ENCODE measurements at regions of chr1 and their contacts with region 1.

Region 1: GRCh38 chr1:234722904-234723720 is 113.1 kb upstream of the IRF2BP2 start:
- DNase-seq: peak; percentile 94
- H3K4me3 ChIP-seq: peak overlapping the region; percentile 12 to 29 (median 19)
- H3K27ac ChIP-seq: peak overlapping the region; percentile 93
- H3K4me1 ChIP-seq: peaks cover 67% of the 10 kb centered on the region
- H3K27me3 ChIP-seq: no peaks in the 10 kb centered on the region
- CTCF ChIP-seq: no peak

Region 2: DNA sequence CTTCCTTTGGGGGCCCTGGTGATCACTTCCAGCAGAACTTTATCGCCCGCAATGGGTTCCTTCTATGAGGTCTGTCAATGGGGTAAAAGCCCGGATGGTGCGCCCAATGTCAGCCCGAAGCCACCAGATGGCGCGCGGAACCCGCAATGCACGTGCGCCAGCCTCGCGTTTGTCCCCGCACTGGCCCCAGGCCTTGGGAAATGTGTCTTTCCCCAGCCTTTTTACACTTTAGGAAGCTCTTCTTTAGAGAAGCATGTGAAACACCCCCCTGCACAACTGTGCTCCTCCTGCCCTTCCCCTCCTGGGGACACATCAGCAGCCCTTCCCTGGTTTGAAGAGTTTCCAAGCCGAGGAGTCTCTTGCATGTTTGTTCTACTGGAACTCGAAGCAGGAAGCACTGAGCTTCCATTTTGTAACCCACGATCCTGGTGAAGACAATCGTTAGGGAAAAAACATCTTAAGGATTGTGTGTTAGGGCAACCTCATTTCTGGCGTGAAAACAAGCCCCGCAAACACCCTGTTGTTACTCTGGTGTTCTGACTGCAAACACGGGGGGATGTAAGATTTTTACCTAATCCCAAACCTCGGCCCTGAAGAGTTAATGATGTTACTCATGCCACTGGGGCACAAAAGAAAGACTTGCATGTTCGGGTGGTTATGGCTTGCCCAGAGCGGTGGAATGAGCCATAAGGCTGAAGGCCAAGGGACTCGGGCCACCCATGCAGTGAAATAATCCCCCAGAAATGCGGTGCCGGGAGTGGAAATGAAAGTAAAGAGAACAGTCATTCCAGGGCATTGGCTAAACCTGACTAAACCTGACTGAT is 223.8 kb before region 1 on chr1:
- CTCF ChIA-PET with region 1: no interaction called
- dilution Hi-C with region 1: no loop called
- in situ Hi-C with region 1: loop called in 1 of 2 experiments (anchors 10 kb)
- intact Hi-C with region 1: loop called (anchors 1 kb)
- DNase-seq: peak; percentile 84
- H3K4me3 ChIP-seq: peak overlapping the region in 2 of 3 experiments; percentile 10 to 13
- H3K27ac ChIP-seq: peak overlapping the region; percentile 90
- H3K4me1 ChIP-seq: peaks cover 38% of the 10 kb centered on the region
- H3K27me3 ChIP-seq: no peaks in the 10 kb centered on the region
- CTCF ChIP-seq: peak; percentile 89 to 97

Region 3: DNA sequence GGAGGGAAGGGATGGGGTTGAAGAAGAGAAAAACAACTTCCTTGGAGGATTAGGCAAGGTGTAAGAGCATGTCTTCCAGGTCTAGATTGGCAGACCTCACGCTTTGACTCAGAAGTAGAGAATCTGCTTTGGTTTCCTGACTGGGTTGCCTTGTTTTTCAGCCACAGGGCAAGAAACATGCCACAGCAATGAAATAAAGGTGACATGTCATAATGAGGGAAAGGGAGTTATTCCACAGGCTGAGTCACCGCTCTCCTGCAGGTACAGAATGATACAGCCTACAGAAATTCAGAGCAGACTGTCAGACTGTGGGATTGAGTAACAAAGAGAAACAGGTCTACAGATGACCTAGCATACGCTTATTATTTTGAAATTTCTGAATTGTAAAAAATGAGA is 158.5 kb before region 1 on chr1:
- CTCF ChIA-PET with region 1: no interaction called
- dilution Hi-C with region 1: no loop called
- in situ Hi-C with region 1: no loop called
- intact Hi-C with region 1: loop called (anchors 1 kb)
- DNase-seq: peak; percentile 100
- H3K4me3 ChIP-seq: no peak overlapping the region
- H3K27ac ChIP-seq: peak overlapping the region; percentile 99
- H3K4me1 ChIP-seq: peaks cover 22% of the 10 kb centered on the region
- H3K27me3 ChIP-seq: no peaks in the 10 kb centered on the region
- CTCF ChIP-seq: no peak

Region 4: GRCh38 chr1:234656856-234657654 is 66.1 kb before region 1 on chr1:
- CTCF ChIA-PET with region 1: interaction called, 4 read pairs
- dilution Hi-C with region 1: loop called (anchors 5 kb)
- in situ Hi-C with region 1: loop called in 1 of 2 experiments (anchors 5 kb)
- intact Hi-C with region 1: loop called (anchors 1 kb)
- DNase-seq: peak; percentile 100
- H3K4me3 ChIP-seq: peak overlapping the region; percentile 51 to 70 (median 61)
- H3K27ac ChIP-seq: peak overlapping the region; percentile 99
- H3K4me1 ChIP-seq: peaks cover 47% of the 10 kb centered on the region
- H3K27me3 ChIP-seq: no peaks in the 10 kb centered on the region
- CTCF ChIP-seq: peak in 1 of 2 donors; percentile 21

Region 5: GRCh38 chr1:234772345-234773147 is 49.4 kb after region 1 on chr1:
- CTCF ChIA-PET with region 1: no interaction called
- dilution Hi-C with region 1: no loop called
- in situ Hi-C with region 1: no loop called
- intact Hi-C with region 1: loop called (anchors 2 kb)
- DNase-seq: peak; percentile 98
- H3K4me3 ChIP-seq: no peak overlapping the region
- H3K27ac ChIP-seq: peak overlapping the region; percentile 62
- H3K4me1 ChIP-seq: peaks cover 13% of the 10 kb centered on the region
- H3K27me3 ChIP-seq: peaks cover 11% of the 10 kb centered on the region
- CTCF ChIP-seq: no peak

Region 6: DNA sequence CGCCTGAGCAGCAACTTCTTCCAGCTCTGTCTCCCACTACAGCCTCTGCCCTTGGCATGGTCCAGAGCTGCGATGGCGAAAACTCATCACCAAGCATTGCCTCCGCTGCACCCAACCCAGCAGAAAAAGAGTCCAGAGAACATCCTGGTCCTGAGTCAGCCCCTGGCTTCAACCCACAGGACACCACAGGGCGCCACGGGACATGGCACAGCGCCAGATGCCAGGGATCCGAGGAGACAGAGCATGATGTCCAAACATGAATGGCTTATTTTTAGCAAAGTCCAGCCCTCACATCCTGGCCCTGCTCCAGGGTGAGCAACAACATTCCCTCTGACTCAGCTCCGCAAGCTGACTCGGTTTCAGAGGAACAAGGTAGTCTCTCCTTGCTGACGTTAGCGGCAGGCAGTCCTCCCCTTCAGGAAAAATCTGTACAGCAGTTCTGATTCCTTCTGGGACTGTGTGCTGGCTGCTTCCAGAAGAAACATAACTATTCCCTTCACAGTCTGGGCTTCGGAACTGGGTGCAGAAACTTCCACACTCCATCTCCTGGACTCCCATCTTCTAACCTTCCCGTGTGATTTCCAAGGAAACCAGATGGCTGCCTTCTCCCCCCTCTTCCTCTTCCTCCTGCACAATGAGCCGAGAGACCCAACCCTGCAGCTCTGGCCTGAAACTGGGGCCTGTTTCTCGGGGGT is 274.2 kb after region 1 on chr1:
- CTCF ChIA-PET with region 1: no interaction called
- dilution Hi-C with region 1: no loop called
- in situ Hi-C with region 1: loop called (anchors 10 kb)
- intact Hi-C with region 1: loop called (anchors 1 kb)
- DNase-seq: peak; percentile 100
- H3K4me3 ChIP-seq: peak overlapping the region in 1 of 3 experiments; percentile 8
- H3K27ac ChIP-seq: peak overlapping the region; percentile 98
- H3K4me1 ChIP-seq: peaks cover 27% of the 10 kb centered on the region
- H3K27me3 ChIP-seq: no peaks in the 10 kb centered on the region
- CTCF ChIP-seq: peak in 1 of 2 donors; percentile 7

Region 7: GRCh38 chr1:235067263-235068172 is 344.4 kb after region 1 on chr1:
- CTCF ChIA-PET with region 1: no interaction called
- dilution Hi-C with region 1: no loop called
- in situ Hi-C with region 1: loop called in 1 of 2 experiments (anchors 10 kb)
- intact Hi-C with region 1: loop called (anchors 1 kb)
- DNase-seq: peak; percentile 100
- H3K4me3 ChIP-seq: no peak overlapping the region
- H3K27ac ChIP-seq: peak overlapping the region; percentile 97
- H3K4me1 ChIP-seq: peaks cover 43% of the 10 kb centered on the region
- H3K27me3 ChIP-seq: no peaks in the 10 kb centered on the region
- CTCF ChIP-seq: peak in 1 of 2 donors; percentile 1